Tibial artery (tissue), 4 donors: ENCODE measurements at regions of chr2 and their contacts with region 1.

Region 1: DNA sequence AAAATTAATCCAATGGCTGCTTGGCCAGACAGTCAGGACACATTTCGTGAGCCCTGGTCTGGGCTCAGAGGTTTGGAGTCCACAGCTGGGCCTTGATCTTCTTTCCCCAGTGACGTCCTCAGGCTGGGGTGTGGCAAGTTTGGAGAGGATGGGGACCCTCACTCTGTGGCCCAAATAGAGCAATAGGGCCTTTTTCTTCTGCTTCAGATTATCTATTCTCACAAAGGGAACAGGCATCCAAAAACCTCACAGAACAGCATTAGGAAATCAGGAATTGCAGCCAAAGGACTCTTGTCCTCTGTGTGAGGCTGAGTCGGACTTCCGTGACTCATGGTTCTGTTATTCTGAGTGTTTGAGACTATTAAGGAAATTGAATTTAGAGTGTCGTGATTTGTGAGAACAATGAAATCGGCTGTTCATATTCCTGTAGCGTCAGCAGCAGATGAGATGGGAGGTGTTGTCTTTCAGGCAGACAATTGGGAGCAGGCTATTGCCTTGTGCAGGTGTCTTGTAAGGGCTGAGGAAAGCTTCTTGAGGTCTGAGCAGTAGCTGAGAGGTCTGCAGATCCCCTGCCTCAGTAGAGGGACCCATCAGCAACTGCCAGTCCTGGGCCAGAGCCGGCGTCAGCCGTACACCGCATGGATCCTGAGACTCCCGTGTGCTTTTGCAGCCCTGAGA is 113.8 kb downstream of the SH3RF3 start:
- DNase-seq: peak in 1 of 2 donors; percentile 79
- H3K4me3 ChIP-seq: peak overlapping the region in 1 of 2 donors; percentile 18
- H3K27ac ChIP-seq: peak overlapping the region; percentile 72 to 84
- H3K4me1 ChIP-seq: peaks cover 23 to 94% (median 66%) of the 10 kb centered on the region in 4 donors
- H3K27me3 ChIP-seq: no peaks in the 10 kb centered on the region
- CTCF ChIP-seq: no peak

Region 2: GRCh38 chr2:109135359-109136197 is 107.2 kb before region 1 on chr2:
- intact Hi-C with region 1: no loop called
- DNase-seq: no peak
- H3K4me3 ChIP-seq: no peak overlapping the region
- H3K27ac ChIP-seq: no peak overlapping the region
- H3K4me1 ChIP-seq: peaks cover 0 to 53% (median 10%) of the 10 kb centered on the region in 4 donors
- H3K27me3 ChIP-seq: no peaks in the 10 kb centered on the region
- CTCF ChIP-seq: no peak

Region 3: GRCh38 chr2:109164739-109165221 is 78.0 kb before region 1 on chr2:
- intact Hi-C with region 1: loop called (anchors 10 kb)
- DNase-seq: peak; percentile 73 to 78
- H3K4me3 ChIP-seq: no peak overlapping the region
- H3K27ac ChIP-seq: peak overlapping the region; percentile 36 to 59
- H3K4me1 ChIP-seq: peaks cover 0 to 61% (median 45%) of the 10 kb centered on the region in 4 donors
- H3K27me3 ChIP-seq: no peaks in the 10 kb centered on the region
- CTCF ChIP-seq: no peak

Region 4: DNA sequence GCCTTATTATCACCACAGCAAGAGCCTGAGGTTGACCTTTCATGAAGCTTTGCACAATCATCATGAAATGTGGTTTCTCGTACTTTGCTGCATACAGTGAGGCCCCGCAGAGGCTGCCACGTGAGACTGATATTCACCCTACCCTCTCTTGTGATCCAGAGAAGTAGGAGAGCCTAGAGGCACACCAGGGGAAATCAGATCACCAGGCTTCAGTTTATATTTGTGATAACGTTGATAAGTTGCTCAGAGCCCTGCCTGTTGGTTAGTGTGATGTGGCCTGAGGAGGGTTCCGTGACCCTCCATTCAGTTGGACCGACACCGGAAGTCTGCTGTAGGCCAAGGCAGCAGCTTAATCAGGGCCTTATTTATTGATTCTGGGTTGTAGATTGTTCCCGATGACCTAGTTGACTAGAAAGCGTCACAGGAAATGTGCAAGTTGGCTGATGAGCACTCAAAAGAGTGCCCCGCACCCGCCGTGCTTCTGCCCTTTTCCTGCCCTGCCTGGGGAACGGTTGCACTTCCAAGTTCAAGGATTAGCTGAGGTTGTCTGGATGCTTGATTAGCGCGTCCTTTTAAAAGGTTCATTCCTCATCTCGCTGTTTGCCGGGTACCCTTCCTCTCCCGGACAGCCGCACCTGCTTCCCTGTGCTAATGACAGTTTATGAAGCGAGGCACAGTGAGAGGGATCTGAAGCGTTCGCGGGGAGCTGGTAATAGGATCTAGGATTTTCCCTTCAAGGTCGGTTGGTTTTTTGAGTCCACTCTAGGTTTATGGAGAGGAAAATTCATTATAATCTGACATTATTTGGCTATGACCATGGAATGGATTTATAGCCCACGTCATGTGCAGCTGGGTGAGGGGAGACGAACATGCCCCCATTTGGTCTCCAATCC is 32.6 kb after region 1 on chr2:
- intact Hi-C with region 1: no loop called
- DNase-seq: no peak
- H3K4me3 ChIP-seq: no peak overlapping the region
- H3K27ac ChIP-seq: no peak overlapping the region
- H3K4me1 ChIP-seq: peaks cover 0 to 9% (median 3%) of the 10 kb centered on the region in 4 donors
- H3K27me3 ChIP-seq: no peaks in the 10 kb centered on the region
- CTCF ChIP-seq: no peak

Region 5: GRCh38 chr2:109322111-109322510 is 79.3 kb after region 1 on chr2:
- intact Hi-C with region 1: loop called (anchors 10 kb)
- DNase-seq: peak; percentile 98 to 99
- H3K4me3 ChIP-seq: peak overlapping the region in 1 of 2 donors; percentile 41
- H3K27ac ChIP-seq: peak overlapping the region; percentile 79 to 92
- H3K4me1 ChIP-seq: peaks cover 3 to 97% (median 84%) of the 10 kb centered on the region in 4 donors
- H3K27me3 ChIP-seq: no peaks in the 10 kb centered on the region
- CTCF ChIP-seq: no peak